ENCODE measurements at regions of chr11 and their contacts with region 1.

Region 1: DNA sequence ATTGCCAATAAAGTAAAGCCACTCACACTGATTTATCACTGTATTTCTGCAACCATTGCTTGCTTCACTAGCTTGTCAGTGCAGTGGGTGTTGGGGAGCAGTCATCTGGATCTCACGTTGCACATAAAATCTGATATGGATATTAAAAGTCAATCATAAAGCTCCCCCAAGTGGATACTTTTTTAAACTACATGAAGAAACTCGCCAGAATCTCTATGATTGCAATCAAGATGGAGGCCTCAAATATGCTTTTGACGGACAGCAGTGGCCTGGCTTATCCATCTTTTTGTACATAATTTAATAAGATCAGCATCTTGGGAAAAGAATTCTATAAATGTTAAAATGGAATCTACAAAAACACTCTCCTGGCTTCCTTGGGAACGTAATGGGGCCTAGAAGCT is 137.7 kb downstream of the WT1 start:
- DNase-seq: no peak
- H3K4me3 Mint-ChIP-seq: no peak overlapping the region
- H3K27ac Mint-ChIP-seq: no peak overlapping the region
- H3K4me1 Mint-ChIP-seq: peaks cover 4% of the 10 kb centered on the region
- H3K27me3 Mint-ChIP-seq: peaks cover 5% of the 10 kb centered on the region

Region 2: DNA sequence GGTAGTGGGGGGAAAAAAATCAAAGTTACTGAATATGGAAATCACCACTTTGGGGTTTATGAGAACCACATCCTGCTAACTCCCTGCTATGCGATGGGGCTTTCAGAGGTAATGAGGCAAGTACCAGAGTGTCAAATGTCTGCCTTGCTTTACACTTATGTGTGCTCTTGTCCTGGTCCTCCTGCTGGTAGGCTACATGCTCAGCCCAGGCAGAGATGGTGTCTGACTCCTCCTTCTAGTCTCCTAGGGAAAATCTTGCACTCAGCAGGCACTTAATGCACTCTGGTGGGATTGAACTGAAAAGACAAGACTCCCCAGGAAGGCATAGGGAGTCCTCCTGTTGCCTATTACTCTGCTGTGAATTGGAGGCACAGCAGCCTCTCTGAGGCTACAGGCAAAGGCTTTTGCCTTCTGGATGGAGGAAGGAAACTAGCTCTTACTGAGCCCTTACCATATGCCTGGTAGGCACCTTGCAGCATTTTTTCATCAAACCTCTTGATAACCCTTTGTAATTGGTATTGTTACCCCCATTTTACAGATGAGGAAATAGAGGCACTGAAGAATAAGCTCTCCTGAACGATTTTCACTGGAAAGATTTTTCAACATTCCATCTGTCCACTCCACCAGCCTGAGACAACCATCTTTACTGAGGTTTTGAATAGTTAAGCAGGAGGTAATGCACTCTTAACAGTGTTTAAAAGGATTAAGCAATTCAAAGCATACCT is 354.4 kb before region 1 on chr11:
- intact Hi-C with region 1: no loop called
- DNase-seq: no peak
- H3K4me3 Mint-ChIP-seq: no peak overlapping the region
- H3K27ac Mint-ChIP-seq: no peak overlapping the region
- H3K4me1 Mint-ChIP-seq: peaks cover 2% of the 10 kb centered on the region
- H3K27me3 Mint-ChIP-seq: peaks cover 13% of the 10 kb centered on the region

Region 3: GRCh38 chr11:32184723-32185055 is 112.9 kb before region 1 on chr11:
- intact Hi-C with region 1: loop called (anchors 5 kb)
- DNase-seq: no peak
- H3K4me3 Mint-ChIP-seq: no peak overlapping the region
- H3K27ac Mint-ChIP-seq: no peak overlapping the region
- H3K4me1 Mint-ChIP-seq: no peaks in the 10 kb centered on the region
- H3K27me3 Mint-ChIP-seq: peaks cover 21% of the 10 kb centered on the region

Region 4: DNA sequence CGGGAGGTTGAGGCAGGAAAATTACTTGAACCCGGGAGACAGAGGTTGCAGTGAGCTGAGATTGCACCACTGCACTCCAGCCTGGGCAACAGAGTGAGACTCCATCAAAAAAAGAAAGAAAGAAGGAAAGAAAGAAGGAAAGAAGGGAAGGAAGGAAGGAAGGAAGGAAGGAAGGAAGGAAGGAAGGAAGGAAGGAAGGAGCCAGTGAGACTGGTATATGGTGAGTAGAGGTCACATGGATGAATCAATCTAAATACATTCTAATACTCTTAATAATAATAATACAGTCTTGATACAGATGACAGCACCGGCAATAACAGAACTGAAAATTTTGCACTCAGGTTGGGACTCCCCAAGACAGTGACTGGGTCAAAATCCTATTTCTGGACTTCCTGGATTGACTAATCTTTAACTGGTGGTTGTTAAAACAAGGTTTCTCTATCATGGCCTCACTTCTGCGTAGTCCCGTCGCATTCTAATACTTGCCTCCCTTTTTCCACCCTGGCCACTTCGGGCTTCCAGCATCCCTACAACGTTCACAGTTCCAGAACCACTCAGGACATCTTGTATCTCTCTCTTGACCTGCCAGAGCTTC is 232.5 kb after region 1 on chr11:
- intact Hi-C with region 1: no loop called
- DNase-seq: no peak
- H3K4me3 Mint-ChIP-seq: no peak overlapping the region
- H3K27ac Mint-ChIP-seq: no peak overlapping the region
- H3K4me1 Mint-ChIP-seq: no peaks in the 10 kb centered on the region
- H3K27me3 Mint-ChIP-seq: no peaks in the 10 kb centered on the region

Measured in activated T-helper 2 cell treated with anti-CD3 and anti-CD28 coated beads, Interferon-gamma antibody, Interleukin-2, Interleukin-4, amounts not matched to agents 10 μg/mL and 5 μg/mL and 100 μg/mL, durations not matched to agents 14 hours and 24 hours and 36 hours (primary cell).